ENCODE measurements at regions of chr2 and their contacts with region 1.

Region 1: GRCh38 chr2:197556456-197556855 is 40.6 kb downstream of the MOB4 start:
- DNase-seq: peak; percentile 82
- H3K4me3 ChIP-seq: no peak overlapping the region
- H3K27ac ChIP-seq: peak overlapping the region; percentile 7
- H3K4me1 ChIP-seq: peaks cover 16% of the 10 kb centered on the region
- H3K27me3 ChIP-seq: no peaks in the 10 kb centered on the region
- CTCF ChIP-seq: no peak
- POLR2A ChIP-seq: no peak

Region 2: DNA sequence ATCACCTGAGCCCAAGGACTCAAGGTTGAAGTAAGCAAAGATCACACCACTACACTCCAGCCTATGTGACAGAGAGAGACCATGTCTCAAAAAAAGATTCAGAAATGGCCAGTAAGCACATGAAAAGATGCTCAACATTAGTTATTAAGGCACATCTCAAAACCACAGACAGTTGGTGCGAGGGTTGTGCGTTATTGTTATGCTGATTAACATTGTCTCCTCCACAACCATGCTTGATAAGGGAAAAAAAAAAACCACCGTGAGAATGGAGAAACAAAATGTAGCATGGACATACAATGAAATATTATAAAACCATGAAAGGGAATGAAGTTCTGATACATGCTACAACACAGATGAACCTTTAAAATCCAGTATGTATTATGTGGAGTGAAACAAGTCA is 13.2 kb before region 1 on chr2:
- CTCF ChIA-PET with region 1: no interaction called
- POLR2A ChIA-PET with region 1: no interaction called
- dilution Hi-C with region 1: no loop called
- intact Hi-C with region 1: loop called (anchors 2 kb)
- DNase-seq: no peak
- H3K4me3 ChIP-seq: no peak overlapping the region
- H3K27ac ChIP-seq: no peak overlapping the region
- H3K4me1 ChIP-seq: no peaks in the 10 kb centered on the region
- H3K27me3 ChIP-seq: no peaks in the 10 kb centered on the region
- CTCF ChIP-seq: no peak
- POLR2A ChIP-seq: no peak

Region 3: GRCh38 chr2:197675711-197676188 is 119.3 kb after region 1 on chr2:
- CTCF ChIA-PET with region 1: no interaction called
- POLR2A ChIA-PET with region 1: no interaction called
- dilution Hi-C with region 1: no loop called
- intact Hi-C with region 1: loop called (anchors 5 kb)
- DNase-seq: peak; percentile 88
- H3K4me3 ChIP-seq: peak overlapping the region; percentile 57 to 99 (median 98)
- H3K27ac ChIP-seq: peak overlapping the region; percentile 78
- H3K4me1 ChIP-seq: peaks cover 28% of the 10 kb centered on the region
- H3K27me3 ChIP-seq: no peaks in the 10 kb centered on the region
- CTCF ChIP-seq: no peak
- POLR2A ChIP-seq: peak; percentile 35